Activated T-helper 1 cell treated with anti-CD3 and anti-CD28 coated beads, Interleukin-12 subunit alpha, Interleukin-12 subunit beta, Interleukin-2, Interleukin-4 antibody, amounts not matched to agents 30 ng/mL and 10 ng/mL and 1 ng/mL, durations not matched to agents 14 hours and 24 hours and 36 hours (primary cell): ENCODE measurements at regions of chr4 and their contacts with region 1.

Region 1: DNA sequence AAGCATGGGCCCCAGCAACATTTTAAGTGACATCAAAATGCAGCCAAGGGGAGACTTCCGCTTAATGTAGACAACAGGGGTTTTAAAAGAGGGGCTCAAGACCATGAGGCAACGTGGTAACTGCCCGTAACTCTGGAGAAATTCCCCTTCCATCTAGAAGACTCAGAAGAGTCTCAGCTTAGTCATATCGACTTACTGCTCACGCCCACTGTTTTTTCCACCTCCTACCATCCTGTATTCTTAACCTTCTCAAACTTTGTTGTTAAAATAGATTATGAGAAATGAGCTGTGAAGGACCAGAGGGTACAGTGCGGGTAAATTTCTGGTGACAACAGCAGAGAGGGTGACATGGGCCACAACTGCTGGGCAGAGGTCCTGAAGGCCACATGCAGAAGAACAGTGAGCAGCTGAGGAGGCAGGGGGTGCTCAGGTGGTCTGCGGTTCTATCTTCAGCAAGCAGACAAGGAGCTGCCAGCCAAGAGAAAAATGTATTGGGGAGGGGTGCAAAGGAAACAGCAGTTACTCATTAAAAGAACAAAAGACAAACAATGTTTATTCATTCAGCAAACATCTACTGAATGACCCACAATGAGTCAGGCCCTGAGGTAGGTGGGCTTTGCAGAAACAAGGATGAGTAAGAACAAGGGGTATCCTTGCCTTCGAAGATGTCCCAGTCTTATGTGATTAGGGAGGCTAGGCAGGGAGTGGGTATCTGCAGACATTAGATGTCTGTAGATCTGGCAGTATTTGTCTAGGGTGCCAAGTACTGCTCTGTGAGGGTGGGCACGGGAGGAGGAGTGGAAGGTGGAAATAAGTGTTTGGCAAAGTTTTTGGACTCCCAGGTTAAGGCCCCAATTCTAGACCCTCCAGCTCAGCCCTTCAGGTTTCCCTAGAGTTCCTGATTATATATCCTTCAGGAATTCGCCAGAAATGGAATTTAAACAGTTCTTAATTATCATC is 175.3 kb downstream of the TSPAN5 start:
- DNase-seq: peak; percentile 40
- H3K4me3 Mint-ChIP-seq: peak overlapping the region; percentile 72
- H3K27ac Mint-ChIP-seq: peak overlapping the region; percentile 98
- H3K4me1 Mint-ChIP-seq: peaks cover 92% of the 10 kb centered on the region
- H3K27me3 Mint-ChIP-seq: no peaks in the 10 kb centered on the region

Region 2: DNA sequence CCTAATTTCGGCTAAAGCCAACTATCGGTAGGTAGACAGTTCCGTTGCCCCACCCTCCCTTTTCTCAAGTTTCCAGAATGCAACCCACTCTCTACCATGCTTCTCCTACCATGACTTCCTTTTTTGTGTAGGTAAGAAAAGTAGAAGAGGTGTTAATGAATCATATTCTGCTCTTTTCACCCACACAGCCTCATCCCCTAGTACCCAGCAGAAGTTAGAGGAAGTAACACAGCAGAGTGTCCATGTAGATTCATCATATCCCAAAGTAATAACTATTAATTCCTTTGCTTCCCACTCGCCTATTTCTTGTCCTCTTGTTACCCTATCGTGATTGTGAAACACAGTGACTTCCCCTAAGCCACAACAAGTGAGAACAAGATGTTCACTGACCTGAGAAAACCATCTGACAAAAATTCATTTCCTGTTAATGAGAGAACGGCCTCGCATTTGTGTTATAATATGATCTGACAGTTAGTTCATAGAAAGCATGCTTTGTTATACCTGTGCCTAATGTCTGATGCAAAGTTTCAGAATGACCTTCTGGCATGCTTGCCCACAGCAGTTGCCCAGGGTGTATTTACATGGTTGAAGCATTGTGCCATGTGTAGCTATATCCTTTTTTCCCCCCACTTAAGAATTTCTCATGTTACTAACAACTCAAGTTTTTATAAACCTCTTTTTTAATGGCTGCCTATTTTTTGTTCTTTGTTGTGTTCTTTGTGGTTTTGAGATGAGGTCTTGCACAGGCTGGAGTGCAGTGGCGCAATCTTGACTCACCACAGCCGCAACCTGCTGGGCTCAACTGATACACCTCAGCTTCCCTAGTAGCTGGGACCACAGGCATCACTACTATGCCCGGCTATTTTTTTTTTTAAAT is 36.4 kb before region 1 on chr4:
- intact Hi-C with region 1: loop called (anchors 1 kb)
- DNase-seq: peak; percentile 44
- H3K4me3 Mint-ChIP-seq: peak overlapping the region; percentile 67
- H3K27ac Mint-ChIP-seq: peak overlapping the region; percentile 90
- H3K4me1 Mint-ChIP-seq: peaks cover 43% of the 10 kb centered on the region
- H3K27me3 Mint-ChIP-seq: peaks cover 3% of the 10 kb centered on the region

Region 3: GRCh38 chr4:98493296-98493695 is 10.2 kb after region 1 on chr4:
- intact Hi-C with region 1: loop called (anchors 1 kb)
- DNase-seq: no peak
- H3K4me3 Mint-ChIP-seq: peak overlapping the region; percentile 3
- H3K27ac Mint-ChIP-seq: peak overlapping the region; percentile 67
- H3K4me1 Mint-ChIP-seq: peaks cover 54% of the 10 kb centered on the region
- H3K27me3 Mint-ChIP-seq: no peaks in the 10 kb centered on the region

Region 4: GRCh38 chr4:99144070-99144469 is 660.9 kb after region 1 on chr4 and contains the start of gene ADH4:
- intact Hi-C with region 1: no loop called
- DNase-seq: no peak
- H3K4me3 Mint-ChIP-seq: no peak within 1 kb of the TSS
- H3K27ac Mint-ChIP-seq: no peak within 1 kb of the TSS
- H3K4me1 Mint-ChIP-seq: no peaks in the 10 kb centered on the region
- H3K27me3 Mint-ChIP-seq: no peaks in the 10 kb centered on the region
- total RNA-seq, gene ADH4: not detected in 2 replicates